PC-9 (cell line): ENCODE measurements at regions of chr13 and their contacts with region 1.

Region 1: GRCh38 chr13:73058736-73059459 is at the start of gene KLF5:
- DNase-seq: peak; percentile 92 to 99
- H3K4me3 ChIP-seq: peak within 1 kb of the TSS; percentile 89
- H3K27ac ChIP-seq: peak within 1 kb of the TSS; percentile 96
- H3K4me1 ChIP-seq: peaks cover 62% of the 10 kb centered on the region
- H3K27me3 ChIP-seq: no peaks in the 10 kb centered on the region
- CTCF ChIP-seq: no peak
- total RNA-seq, gene KLF5: 54.3 and 65.9 TPM in 2 replicates

Region 2: DNA sequence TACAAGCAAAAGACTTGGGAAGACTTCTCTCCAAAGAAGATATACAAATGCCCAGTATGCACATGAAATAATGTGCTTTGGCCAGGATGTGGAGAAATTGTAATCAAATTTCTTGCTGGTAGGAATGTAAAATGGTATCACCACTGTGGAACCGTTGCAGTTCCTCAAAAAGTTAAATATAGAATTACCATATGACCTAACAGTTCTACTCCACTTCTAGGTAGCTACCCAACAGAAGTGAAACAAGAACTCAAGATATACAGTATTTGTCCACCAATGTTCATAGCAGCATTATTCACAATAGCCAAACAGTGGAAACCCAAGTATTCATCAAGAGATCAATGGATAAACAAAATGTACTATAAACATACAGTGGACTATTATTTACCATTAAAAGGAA is 95.1 kb before region 1 on chr13:
- CTCF ChIA-PET with region 1: no interaction called
- POLR2A ChIA-PET with region 1: no interaction called
- intact Hi-C with region 1: loop called (anchors 2 kb)
- DNase-seq: no peak
- H3K4me3 ChIP-seq: no peak overlapping the region
- H3K27ac ChIP-seq: no peak overlapping the region
- H3K4me1 ChIP-seq: peaks cover 30% of the 10 kb centered on the region
- H3K27me3 ChIP-seq: no peaks in the 10 kb centered on the region
- CTCF ChIP-seq: no peak

Region 3: GRCh38 chr13:73138643-73139491 is 80.0 kb after region 1 on chr13:
- CTCF ChIA-PET with region 1: interaction called, 3 read pairs
- POLR2A ChIA-PET with region 1: interaction called, 3 read pairs
- intact Hi-C with region 1: loop called (anchors 2 kb)
- DNase-seq: peak; percentile 63 to 97
- H3K4me3 ChIP-seq: peak overlapping the region; percentile 57; the same call in 1 of the 2 replicates
- H3K27ac ChIP-seq: peak overlapping the region; percentile 100
- H3K4me1 ChIP-seq: peaks cover 74% of the 10 kb centered on the region
- H3K27me3 ChIP-seq: no peaks in the 10 kb centered on the region
- CTCF ChIP-seq: no peak

Region 4: GRCh38 chr13:73299787-73300186 is 240.9 kb after region 1 on chr13:
- CTCF ChIA-PET with region 1: no interaction called
- POLR2A ChIA-PET with region 1: interaction called, 17 read pairs
- intact Hi-C with region 1: no loop called
- DNase-seq: no peak
- H3K4me3 ChIP-seq: no peak overlapping the region
- H3K27ac ChIP-seq: no peak overlapping the region
- H3K4me1 ChIP-seq: no peaks in the 10 kb centered on the region
- H3K27me3 ChIP-seq: no peaks in the 10 kb centered on the region
- CTCF ChIP-seq: no peak

Region 5: DNA sequence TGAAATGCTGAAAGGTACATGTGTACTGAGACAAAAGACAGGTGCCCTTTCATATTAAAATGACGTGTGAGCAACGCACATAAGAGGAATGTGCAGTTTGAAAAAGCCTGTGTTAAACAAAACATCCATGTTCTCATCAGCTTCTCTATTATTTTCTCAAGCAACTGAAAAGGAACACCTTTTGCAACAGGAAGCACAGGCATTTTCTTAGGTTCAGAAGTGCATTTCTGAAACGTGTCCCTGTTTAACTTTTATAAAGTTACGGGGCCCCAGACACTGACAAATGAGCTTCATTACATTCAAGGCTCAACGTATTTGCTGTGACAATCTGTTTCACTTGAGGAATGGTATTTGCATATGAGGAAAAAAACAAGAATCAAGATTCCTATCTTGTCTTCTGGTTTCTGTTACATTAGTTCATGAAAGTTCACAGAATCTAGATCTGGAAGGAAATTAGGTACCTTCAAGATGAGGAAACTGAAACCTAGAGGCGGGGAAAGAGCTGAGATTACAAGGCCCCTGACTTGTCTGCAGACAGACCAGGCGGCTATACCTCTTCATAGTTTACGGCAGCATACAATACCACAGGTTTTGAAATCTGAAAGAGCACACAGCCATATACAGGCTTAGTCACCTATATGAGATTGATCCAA is 643.6 kb after region 1 on chr13:
- CTCF ChIA-PET with region 1: no interaction called
- POLR2A ChIA-PET with region 1: interaction called, 37 read pairs
- intact Hi-C with region 1: loop called (anchors 2 kb)
- DNase-seq: peak in 1 of 2 experiments; percentile 23
- H3K4me3 ChIP-seq: no peak overlapping the region
- H3K27ac ChIP-seq: no peak overlapping the region
- H3K4me1 ChIP-seq: no peaks in the 10 kb centered on the region
- H3K27me3 ChIP-seq: no peaks in the 10 kb centered on the region
- CTCF ChIP-seq: no peak